Endothelial cell of umbilical vein (primary cell): ENCODE measurements at regions of chr10 and their contacts with region 1.

Region 1: GRCh38 chr10:33234831-33235237 is 99.6 kb downstream of the NRP1 start:
- DNase-seq: peak; percentile 87
- H3K4me3 ChIP-seq: no peak overlapping the region
- H3K27ac ChIP-seq: peak overlapping the region; percentile 99
- H3K4me1 ChIP-seq: peaks cover 71% of the 10 kb centered on the region
- H3K27me3 ChIP-seq: no peaks in the 10 kb centered on the region
- CTCF ChIP-seq: no peak
- POLR2A ChIP-seq: no peak

Region 2: GRCh38 chr10:33216661-33217427 is 18.0 kb before region 1 on chr10:
- CTCF ChIA-PET with region 1: interaction called, 5 read pairs
- POLR2A ChIA-PET with region 1: no interaction called
- dilution Hi-C with region 1: no loop called
- intact Hi-C with region 1: loop called (anchors 1 kb)
- DNase-seq: peak; percentile 60
- H3K4me3 ChIP-seq: no peak overlapping the region
- H3K27ac ChIP-seq: peak overlapping the region; percentile 94
- H3K4me1 ChIP-seq: peaks cover 48% of the 10 kb centered on the region
- H3K27me3 ChIP-seq: no peaks in the 10 kb centered on the region
- CTCF ChIP-seq: no peak
- POLR2A ChIP-seq: no peak

Region 3: GRCh38 chr10:33258967-33259366 is 24.1 kb after region 1 on chr10:
- CTCF ChIA-PET with region 1: interaction called, 10 read pairs
- POLR2A ChIA-PET with region 1: interaction called, 9 read pairs
- dilution Hi-C with region 1: no loop called
- intact Hi-C with region 1: loop called (anchors 1 kb)
- DNase-seq: no peak
- H3K4me3 ChIP-seq: no peak overlapping the region
- H3K27ac ChIP-seq: no peak overlapping the region
- H3K4me1 ChIP-seq: peaks cover 48% of the 10 kb centered on the region
- H3K27me3 ChIP-seq: no peaks in the 10 kb centered on the region
- CTCF ChIP-seq: no peak
- POLR2A ChIP-seq: no peak

Region 4: DNA sequence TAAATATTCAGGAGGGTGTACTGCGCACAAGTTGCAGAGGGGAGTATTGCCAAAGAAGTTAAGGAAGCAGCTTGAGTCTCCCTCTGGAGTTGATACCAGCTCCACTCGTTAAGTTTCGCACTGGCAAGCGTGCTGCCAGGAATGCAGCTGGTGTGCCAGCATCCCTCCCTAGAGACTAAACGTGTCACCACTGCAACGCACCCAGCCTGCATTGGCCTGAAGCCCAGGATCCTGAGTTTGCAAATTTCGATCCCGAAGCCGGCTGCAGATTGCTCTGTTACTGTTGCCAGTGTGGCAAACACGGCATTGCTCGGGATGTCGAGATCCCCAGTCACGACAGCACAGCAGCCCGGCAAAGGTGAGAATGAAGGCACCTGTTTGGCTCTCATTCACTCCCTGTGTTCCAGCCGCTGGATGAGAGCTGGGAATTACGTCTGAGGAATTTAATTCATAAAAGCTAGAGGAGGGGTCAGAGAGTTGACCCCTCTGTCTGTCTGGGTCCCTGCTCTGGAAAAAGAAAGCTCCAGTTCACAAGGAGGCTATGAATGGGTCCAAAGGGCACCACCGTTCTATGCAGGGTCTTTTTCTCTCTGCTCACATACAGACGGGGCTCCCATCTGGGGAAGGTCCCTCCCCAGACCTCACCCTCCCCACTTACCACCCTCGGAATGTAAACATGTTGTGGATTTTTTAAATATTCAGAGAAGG is 38.6 kb after region 1 on chr10:
- CTCF ChIA-PET with region 1: interaction called, 10 read pairs
- POLR2A ChIA-PET with region 1: no interaction called
- dilution Hi-C with region 1: no loop called
- intact Hi-C with region 1: no loop called
- DNase-seq: peak; percentile 93
- H3K4me3 ChIP-seq: no peak overlapping the region
- H3K27ac ChIP-seq: peak overlapping the region; percentile 85
- H3K4me1 ChIP-seq: peaks cover 46% of the 10 kb centered on the region
- H3K27me3 ChIP-seq: no peaks in the 10 kb centered on the region
- CTCF ChIP-seq: peak in 1 of 2 donors; percentile 28
- POLR2A ChIP-seq: peak; percentile 51

Region 5: DNA sequence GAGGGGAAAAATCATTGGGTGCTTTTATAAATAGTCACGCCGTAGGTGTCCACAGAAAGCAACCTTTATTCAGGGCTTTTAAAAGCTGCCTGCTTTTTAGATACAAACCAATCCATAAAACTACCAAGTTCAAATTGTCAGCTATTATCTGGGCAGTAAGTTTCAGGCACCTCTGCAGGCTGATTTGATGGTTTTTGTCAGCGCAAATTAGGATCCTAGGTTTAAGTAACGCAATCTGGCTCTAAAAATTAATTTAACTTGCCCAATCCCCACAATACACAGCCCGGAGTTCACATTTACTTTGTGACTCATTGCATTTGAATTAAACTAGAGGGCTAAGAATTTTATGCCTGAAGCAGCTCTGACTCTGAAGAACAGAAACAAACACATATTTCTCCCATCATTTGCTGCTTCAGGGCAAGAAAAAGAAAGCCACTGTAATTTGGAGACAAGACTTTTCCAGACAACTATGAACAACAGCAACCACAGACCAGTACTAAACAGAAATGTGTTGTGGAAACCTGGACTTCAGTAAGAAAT is 56.3 kb after region 1 on chr10:
- CTCF ChIA-PET with region 1: no interaction called
- POLR2A ChIA-PET with region 1: no interaction called
- dilution Hi-C with region 1: no loop called
- intact Hi-C with region 1: no loop called
- DNase-seq: no peak
- H3K4me3 ChIP-seq: no peak overlapping the region
- H3K27ac ChIP-seq: no peak overlapping the region
- H3K4me1 ChIP-seq: peaks cover 40% of the 10 kb centered on the region
- H3K27me3 ChIP-seq: no peaks in the 10 kb centered on the region
- CTCF ChIP-seq: no peak
- POLR2A ChIP-seq: no peak